Mammary epithelial cell (primary cell): ENCODE measurements at regions of chr9 and their contacts with region 1.

Region 1: GRCh38 chr9:93071464-93071863 is 13.0 kb downstream of the SUSD3 start:
- DNase-seq: no peak
- H3K4me3 ChIP-seq: no peak overlapping the region
- H3K27ac ChIP-seq: no peak overlapping the region
- H3K4me1 ChIP-seq: no peaks in the 10 kb centered on the region
- H3K27me3 ChIP-seq: no peaks in the 10 kb centered on the region
- CTCF ChIP-seq: no peak

Region 2: GRCh38 chr9:93037476-93037971 is 33.9 kb before region 1 on chr9:
- CTCF ChIA-PET with region 1: no interaction called
- dilution Hi-C with region 1: loop called (anchors 5 kb)
- in situ Hi-C with region 1: no loop called
- intact Hi-C with region 1: no loop called
- DNase-seq: no peak
- H3K4me3 ChIP-seq: no peak overlapping the region
- H3K27ac ChIP-seq: no peak overlapping the region
- H3K4me1 ChIP-seq: no peaks in the 10 kb centered on the region
- H3K27me3 ChIP-seq: no peaks in the 10 kb centered on the region
- CTCF ChIP-seq: no peak